ENCODE measurements at regions of chrX and their contacts with region 1.

Region 1: GRCh38 chrX:125262836-125263235 is 56.8 kb upstream of the TEX13C start:
- DNase-seq: no peak
- ATAC-seq: no peak
- H3K4me3 Mint-ChIP-seq: no peak overlapping the region
- H3K27ac Mint-ChIP-seq: no peak overlapping the region
- H3K4me1 Mint-ChIP-seq: no peaks in the 10 kb centered on the region
- H3K27me3 Mint-ChIP-seq: no peaks in the 10 kb centered on the region

Region 2: DNA sequence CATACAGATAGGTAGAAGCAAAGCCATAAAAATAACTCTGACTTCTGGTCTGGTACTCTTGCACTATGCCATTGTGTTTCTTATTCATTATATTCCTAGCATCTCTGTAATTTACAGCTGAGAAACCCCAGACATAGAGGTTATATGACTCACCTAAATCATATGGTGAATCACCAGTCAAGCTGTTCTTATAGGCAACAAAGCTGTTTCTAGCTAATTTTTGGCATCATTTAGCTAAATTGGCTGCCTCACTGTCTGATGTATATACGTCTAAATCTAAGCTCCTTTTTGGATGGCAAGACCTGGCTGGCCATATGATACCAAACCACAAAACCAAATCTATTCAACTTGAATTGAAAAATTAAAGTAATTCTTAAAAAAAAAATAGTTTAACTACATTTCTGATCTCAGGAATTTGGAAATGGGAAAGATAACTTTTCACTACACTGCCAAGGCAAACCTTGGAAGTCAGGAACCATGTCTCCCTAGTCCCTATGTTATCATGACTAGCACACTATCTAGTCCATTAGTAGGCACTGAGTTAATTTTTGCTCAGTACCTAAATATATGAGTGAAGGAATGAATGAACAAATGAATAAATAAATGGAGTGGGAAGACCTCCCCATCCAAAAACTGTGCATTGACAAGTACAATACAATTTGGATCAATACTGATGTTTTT is 1342.6 kb before region 1 on chrX:
- CTCF ChIA-PET with region 1: no interaction called
- POLR2A ChIA-PET with region 1: no interaction called
- intact Hi-C with region 1: loop called in 1 of 2 experiments (anchors 5 kb)
- DNase-seq: no peak
- ATAC-seq: peak; percentile 95
- H3K4me3 Mint-ChIP-seq: no peak overlapping the region
- H3K27ac Mint-ChIP-seq: no peak overlapping the region
- H3K4me1 Mint-ChIP-seq: no peaks in the 10 kb centered on the region
- H3K27me3 Mint-ChIP-seq: no peaks in the 10 kb centered on the region

Region 3: DNA sequence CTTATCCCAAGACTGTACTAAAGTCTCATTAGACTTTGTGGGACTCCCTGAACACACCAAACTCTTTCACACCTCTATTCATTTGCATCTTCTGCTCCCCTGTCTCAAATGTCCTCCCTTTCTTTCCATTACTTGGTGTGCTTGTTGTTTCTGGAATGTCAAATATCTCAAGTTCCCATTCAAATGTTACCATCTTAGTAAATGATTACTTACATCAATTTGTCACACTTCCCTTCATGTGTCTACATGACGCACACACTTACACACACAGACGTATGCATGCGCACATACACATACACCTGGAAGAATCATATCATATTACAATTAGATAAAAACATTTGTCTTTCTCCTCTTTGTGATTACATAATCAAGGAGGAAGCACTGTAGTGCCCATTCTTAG is 153.9 kb before region 1 on chrX:
- CTCF ChIA-PET with region 1: no interaction called
- POLR2A ChIA-PET with region 1: no interaction called
- intact Hi-C with region 1: no loop called
- DNase-seq: no peak
- ATAC-seq: no peak
- H3K4me3 Mint-ChIP-seq: no peak overlapping the region
- H3K27ac Mint-ChIP-seq: no peak overlapping the region
- H3K4me1 Mint-ChIP-seq: no peaks in the 10 kb centered on the region
- H3K27me3 Mint-ChIP-seq: peaks cover 2% of the 10 kb centered on the region

Region 4: GRCh38 chrX:125507119-125507518 is 244.3 kb after region 1 on chrX:
- CTCF ChIA-PET with region 1: no interaction called
- POLR2A ChIA-PET with region 1: no interaction called
- intact Hi-C with region 1: no loop called
- DNase-seq: no peak
- ATAC-seq: no peak
- H3K4me3 Mint-ChIP-seq: no peak overlapping the region
- H3K27ac Mint-ChIP-seq: no peak overlapping the region
- H3K4me1 Mint-ChIP-seq: no peaks in the 10 kb centered on the region
- H3K27me3 Mint-ChIP-seq: no peaks in the 10 kb centered on the region